Activated CD4-positive, alpha-beta T cell treated with anti-CD3 and anti-CD28 coated beads for 36 hours (primary cell): ENCODE measurements at regions of chr6 and their contacts with region 1.

Region 1: GRCh38 chr6:116633685-116634084 is 17.4 kb downstream of the RSPH4A start:
- DNase-seq: no peak
- ATAC-seq: peak; percentile 47
- H3K4me3 Mint-ChIP-seq: no peak overlapping the region
- H3K27ac Mint-ChIP-seq: no peak overlapping the region
- H3K4me1 Mint-ChIP-seq: peaks cover 2% of the 10 kb centered on the region
- H3K27me3 Mint-ChIP-seq: no peaks in the 10 kb centered on the region

Region 2: DNA sequence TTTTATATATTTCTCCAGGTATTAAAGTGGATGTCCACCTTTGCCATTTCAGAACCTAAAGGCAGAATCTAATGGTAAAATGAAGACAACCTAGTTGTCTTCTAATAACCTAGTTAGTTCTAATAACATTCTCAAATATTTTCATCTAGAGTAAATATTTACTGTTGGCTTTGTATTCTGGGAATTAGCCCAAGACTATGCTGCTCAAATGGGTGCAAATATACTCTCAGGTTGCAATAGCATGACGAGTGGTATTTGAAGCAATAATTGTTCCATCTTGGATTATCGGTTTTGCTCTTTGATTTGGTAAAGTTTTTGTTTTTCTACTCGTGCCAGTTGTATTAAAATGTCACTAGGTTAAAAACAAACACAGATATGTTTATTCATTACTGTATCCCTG is 38.4 kb before region 1 on chr6:
- CTCF ChIA-PET with region 1: interaction called, 3 read pairs
- POLR2A ChIA-PET with region 1: no interaction called
- intact Hi-C with region 1: loop called in 1 of 2 experiments (anchors 1 kb)
- DNase-seq: no peak
- ATAC-seq: no peak
- H3K4me3 Mint-ChIP-seq: no peak overlapping the region
- H3K27ac Mint-ChIP-seq: no peak overlapping the region
- H3K4me1 Mint-ChIP-seq: no peaks in the 10 kb centered on the region
- H3K27me3 Mint-ChIP-seq: no peaks in the 10 kb centered on the region

Region 3: GRCh38 chr6:116847227-116847626 is 213.5 kb after region 1 on chr6:
- CTCF ChIA-PET with region 1: no interaction called
- POLR2A ChIA-PET with region 1: no interaction called
- intact Hi-C with region 1: loop called in 1 of 2 experiments (anchors 10 kb)
- DNase-seq: no peak
- ATAC-seq: no peak
- H3K4me3 Mint-ChIP-seq: no peak overlapping the region
- H3K27ac Mint-ChIP-seq: no peak overlapping the region
- H3K4me1 Mint-ChIP-seq: no peaks in the 10 kb centered on the region
- H3K27me3 Mint-ChIP-seq: peaks cover 7% of the 10 kb centered on the region

Region 4: DNA sequence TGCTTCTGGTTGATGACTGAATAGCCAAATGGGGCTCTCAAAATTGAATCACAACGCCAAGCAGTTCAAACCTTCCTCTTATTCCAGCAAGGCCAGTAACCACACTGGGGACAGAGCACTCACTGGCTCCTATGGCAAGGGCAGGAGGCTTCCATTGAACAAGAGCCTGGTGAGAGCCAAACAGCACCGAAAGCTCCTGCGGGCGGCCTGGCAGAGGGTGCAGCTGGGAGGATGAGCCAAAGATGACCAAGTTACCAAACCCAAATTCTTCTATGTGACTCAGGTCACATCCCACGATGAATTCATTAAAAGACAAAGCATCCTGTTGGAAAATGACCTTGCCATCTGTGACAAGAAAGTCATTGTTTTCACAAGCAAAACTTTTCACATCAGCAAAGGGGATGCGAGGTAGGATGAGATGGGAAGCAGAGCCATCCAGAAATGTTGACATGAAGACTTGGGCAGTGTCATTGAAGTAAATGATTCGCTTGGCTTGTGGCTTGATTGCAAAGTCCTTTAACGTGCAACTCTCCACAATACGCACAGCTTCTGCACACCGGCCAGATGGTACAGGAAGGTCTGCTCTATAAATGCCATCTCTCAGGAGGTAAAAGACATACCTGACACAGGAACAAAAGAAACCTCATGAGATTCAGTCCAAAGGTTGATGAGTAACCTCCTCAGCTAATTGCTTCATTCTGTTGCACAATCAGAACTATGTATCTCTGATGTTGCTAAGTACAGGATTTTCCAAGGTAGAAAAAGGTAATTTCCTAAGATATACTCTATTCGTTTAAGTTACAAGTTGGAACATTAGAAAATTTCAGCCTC is 755.8 kb after region 1 on chr6:
- CTCF ChIA-PET with region 1: no interaction called
- POLR2A ChIA-PET with region 1: no interaction called
- intact Hi-C with region 1: no loop called
- DNase-seq: no peak
- ATAC-seq: no peak
- H3K4me3 Mint-ChIP-seq: no peak overlapping the region
- H3K27ac Mint-ChIP-seq: no peak overlapping the region
- H3K4me1 Mint-ChIP-seq: no peaks in the 10 kb centered on the region
- H3K27me3 Mint-ChIP-seq: peaks cover 2% of the 10 kb centered on the region